B cell (primary cell): ENCODE measurements at regions of chr7 and their contacts with region 1.

Region 1: GRCh38 chr7:91880413-91881241 is at the start of gene MTERF1:
- DNase-seq: peak; percentile 95
- ATAC-seq: peak; percentile 96
- H3K4me3 ChIP-seq: peak within 1 kb of the TSS; percentile 82 to 97 (median 85)
- H3K4me3 Mint-ChIP-seq: peak within 1 kb of the TSS; percentile 95
- H3K27ac ChIP-seq: peak within 1 kb of the TSS; percentile 65 to 72
- H3K27ac Mint-ChIP-seq: peak within 1 kb of the TSS; percentile 87
- H3K4me1 ChIP-seq: peaks cover 10 to 12% of the 10 kb centered on the region in 2 donors
- H3K4me1 Mint-ChIP-seq: peaks cover 30% of the 10 kb centered on the region
- H3K27me3 ChIP-seq: no peaks in the 10 kb centered on the region
- H3K27me3 Mint-ChIP-seq: peaks cover 2% of the 10 kb centered on the region
- CTCF ChIP-seq: peak; percentile 88
- total RNA-seq, gene MTERF1: 33.7 and 34.4 TPM in 2 replicates

Region 2: DNA sequence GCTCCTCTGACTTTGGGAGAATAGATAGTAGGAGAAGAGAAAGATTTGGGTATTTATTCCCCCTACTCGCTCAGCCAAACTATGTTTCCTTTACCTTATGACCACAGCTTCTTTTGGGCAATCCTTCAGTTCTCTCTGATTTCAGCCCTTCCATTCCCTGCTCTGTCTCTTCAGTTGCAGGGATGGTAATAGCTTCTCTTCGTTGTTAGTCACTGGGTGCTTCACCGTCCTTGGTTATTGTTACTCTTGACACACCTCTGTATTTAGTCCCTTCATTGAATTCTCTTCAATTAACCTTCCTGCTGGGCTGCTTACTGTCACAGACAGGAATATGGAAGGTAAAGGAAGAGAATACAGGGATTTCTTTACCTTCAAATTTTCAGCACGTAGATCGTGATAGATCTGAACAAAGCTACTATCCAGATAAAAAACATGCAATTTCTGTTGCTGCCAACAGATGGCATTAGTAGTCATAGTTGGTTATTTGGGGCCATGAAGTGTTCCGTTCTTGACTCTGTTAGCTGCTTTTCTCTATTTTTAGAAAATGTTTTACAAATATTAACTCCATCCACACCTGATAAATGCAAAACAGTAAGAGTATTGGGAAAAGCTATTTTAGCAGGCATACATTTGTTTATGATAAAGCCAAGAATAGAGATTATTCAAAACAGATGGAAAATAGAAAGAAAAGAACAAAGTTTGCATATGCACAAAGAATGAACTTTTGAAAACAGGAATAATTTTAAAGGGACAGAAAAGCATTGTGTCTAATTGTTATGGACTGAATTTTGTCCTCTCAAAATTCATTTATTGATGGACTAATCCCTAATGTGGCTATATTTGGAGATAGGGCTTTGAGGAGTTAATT is 1425.2 kb before region 1 on chr7:
- CTCF ChIA-PET with region 1: interaction called, 4 read pairs
- POLR2A ChIA-PET with region 1: no interaction called
- intact Hi-C with region 1: loop called (anchors 1 kb)
- DNase-seq: peak; percentile 67
- ATAC-seq: peak; percentile 74
- H3K4me3 ChIP-seq: peak overlapping the region in 1 of 5 experiments; percentile 23
- H3K4me3 Mint-ChIP-seq: peak overlapping the region; percentile 69
- H3K27ac ChIP-seq: no peak overlapping the region
- H3K27ac Mint-ChIP-seq: peak overlapping the region; percentile 48
- H3K4me1 ChIP-seq: peaks cover 5 to 8% of the 10 kb centered on the region in 2 donors
- H3K4me1 Mint-ChIP-seq: peaks cover 7% of the 10 kb centered on the region
- H3K27me3 ChIP-seq: peaks cover 0 to 3% (median 0%) of the 10 kb centered on the region in 4 experiments
- H3K27me3 Mint-ChIP-seq: peaks cover 10% of the 10 kb centered on the region
- CTCF ChIP-seq: peak; percentile 83

Region 3: DNA sequence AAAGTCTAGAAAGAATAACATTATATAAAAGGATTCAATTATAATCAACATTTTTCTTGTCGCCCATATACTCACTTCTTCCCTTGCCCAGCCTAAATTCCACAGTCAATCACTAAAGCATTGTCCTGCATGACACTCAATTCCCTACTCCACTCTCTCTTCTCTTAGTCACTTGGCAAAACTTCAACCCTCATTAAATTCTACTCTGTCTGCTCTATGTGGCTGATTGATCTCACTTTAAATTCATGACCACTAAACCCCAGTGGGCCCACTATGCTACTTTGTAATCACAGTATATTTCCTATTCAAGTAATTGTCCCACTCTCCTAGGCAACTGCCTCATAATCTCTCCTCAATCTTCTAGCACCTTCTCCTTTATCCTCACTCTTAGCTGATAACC is 54.2 kb before region 1 on chr7:
- CTCF ChIA-PET with region 1: interaction called, 14 read pairs
- POLR2A ChIA-PET with region 1: no interaction called
- intact Hi-C with region 1: loop called (anchors 1 kb)
- DNase-seq: no peak
- ATAC-seq: no peak
- H3K4me3 ChIP-seq: no peak overlapping the region
- H3K4me3 Mint-ChIP-seq: no peak overlapping the region
- H3K27ac ChIP-seq: no peak overlapping the region
- H3K27ac Mint-ChIP-seq: no peak overlapping the region
- H3K4me1 ChIP-seq: no peaks in the 10 kb centered on the region
- H3K4me1 Mint-ChIP-seq: no peaks in the 10 kb centered on the region
- H3K27me3 ChIP-seq: no peaks in the 10 kb centered on the region
- H3K27me3 Mint-ChIP-seq: no peaks in the 10 kb centered on the region
- CTCF ChIP-seq: no peak

Region 4: DNA sequence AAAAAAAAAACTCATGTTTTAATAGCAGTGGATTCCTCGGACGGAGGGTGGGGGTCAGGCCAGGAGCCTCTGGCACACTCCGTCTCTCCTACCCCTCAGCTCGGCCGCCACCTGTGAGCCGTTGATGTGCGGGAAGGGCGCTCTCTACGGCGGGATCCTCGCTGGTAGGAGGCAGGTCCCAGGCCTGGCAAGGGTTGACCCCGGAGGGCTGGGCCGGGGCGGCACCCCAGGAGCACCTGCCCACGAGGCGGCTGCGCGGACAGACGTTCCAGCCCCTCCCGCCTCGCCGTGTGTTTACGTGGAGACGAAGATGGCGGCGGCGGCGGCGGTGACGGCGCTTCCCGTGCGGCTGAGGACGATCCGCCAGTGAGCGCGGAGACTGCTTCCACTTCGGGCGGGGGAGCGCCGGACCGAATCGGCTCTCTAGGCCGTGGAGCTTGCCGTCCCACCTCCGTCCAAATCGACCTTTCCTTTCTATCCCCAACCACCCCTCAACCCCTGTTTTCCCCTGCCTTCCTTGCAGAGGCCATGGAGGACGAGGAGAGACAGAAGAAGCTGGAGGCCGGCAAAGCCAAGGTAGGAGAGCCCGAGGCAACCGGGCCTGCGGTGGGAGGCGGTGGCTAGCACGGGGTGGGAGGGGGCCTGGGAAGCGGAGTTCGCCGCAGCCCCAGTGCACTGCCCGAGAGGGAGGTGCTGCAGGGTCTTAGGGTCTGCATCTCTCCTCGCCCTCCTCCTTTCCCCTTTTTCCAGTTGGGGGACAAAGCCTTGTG is 60.1 kb after region 1 on chr7 and contains the start of gene AKAP9:
- CTCF ChIA-PET with region 1: interaction called, 10 read pairs
- POLR2A ChIA-PET with region 1: interaction called, 9 read pairs
- intact Hi-C with region 1: loop called (anchors 1 kb)
- DNase-seq: peak; percentile 93
- ATAC-seq: peak; percentile 92
- H3K4me3 ChIP-seq: peak within 1 kb of the TSS; percentile 74 to 98 (median 83)
- H3K4me3 Mint-ChIP-seq: peak within 1 kb of the TSS; percentile 95
- H3K27ac ChIP-seq: peak within 1 kb of the TSS; percentile 90 to 97
- H3K27ac Mint-ChIP-seq: peak within 1 kb of the TSS; percentile 95
- H3K4me1 ChIP-seq: peaks cover 20 to 22% of the 10 kb centered on the region in 2 donors
- H3K4me1 Mint-ChIP-seq: peaks cover 31% of the 10 kb centered on the region
- H3K27me3 ChIP-seq: no peaks in the 10 kb centered on the region
- H3K27me3 Mint-ChIP-seq: no peaks in the 10 kb centered on the region
- CTCF ChIP-seq: no peak
- total RNA-seq, gene AKAP9: 101 and 106 TPM in 2 replicates

Region 5: GRCh38 chr7:92178927-92179924 is 298.6 kb after region 1 on chr7 and contains the start of gene LRRD1:
- CTCF ChIA-PET with region 1: no interaction called
- POLR2A ChIA-PET with region 1: no interaction called
- intact Hi-C with region 1: loop called (anchors 5 kb)
- DNase-seq: peak; percentile 89
- ATAC-seq: peak; percentile 100
- H3K4me3 ChIP-seq: peak within 1 kb of the TSS; percentile 21 to 73 (median 56)
- H3K4me3 Mint-ChIP-seq: peak within 1 kb of the TSS; percentile 83
- H3K27ac ChIP-seq: no peak within 1 kb of the TSS
- H3K27ac Mint-ChIP-seq: peak within 1 kb of the TSS; percentile 41
- H3K4me1 ChIP-seq: peaks cover 7 to 9% of the 10 kb centered on the region in 2 donors
- H3K4me1 Mint-ChIP-seq: peaks cover 10% of the 10 kb centered on the region
- H3K27me3 ChIP-seq: no peaks in the 10 kb centered on the region
- H3K27me3 Mint-ChIP-seq: peaks cover 4% of the 10 kb centered on the region
- CTCF ChIP-seq: peak; percentile 100
- total RNA-seq, gene LRRD1: 0.15 and 0.17 TPM in 2 replicates